Body of pancreas (tissue), 4 donors: ENCODE measurements at regions of chr13 and their contacts with region 1.

Region 1: DNA sequence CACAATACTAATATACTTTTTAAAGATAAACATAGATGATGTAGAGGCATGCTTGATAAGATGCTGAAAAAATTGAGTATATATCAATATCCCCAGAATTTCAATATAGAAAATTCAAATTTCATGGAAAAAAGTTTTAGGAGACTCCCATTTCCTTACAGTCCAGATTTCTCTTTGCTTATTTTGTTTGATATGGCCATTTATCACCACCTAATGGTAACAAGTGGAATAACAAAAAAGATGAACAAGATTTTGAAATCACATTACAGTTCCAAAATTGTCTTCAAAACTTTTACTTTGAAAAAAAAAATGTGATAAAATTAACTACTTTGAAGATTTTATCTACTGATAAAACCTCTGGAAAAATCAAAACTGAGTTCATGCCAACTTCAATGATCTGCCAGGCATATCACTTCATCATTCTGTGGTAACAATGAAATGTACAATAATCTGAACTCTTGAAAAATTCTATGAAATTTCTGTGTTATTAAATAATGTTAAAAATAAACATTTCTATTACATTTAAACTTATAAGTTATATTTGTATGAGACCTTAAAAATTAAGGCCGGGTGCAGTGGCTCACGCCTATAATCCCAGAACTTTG is 17.5 kb downstream of the MIPEP start:
- DNase-seq: no peak
- ATAC-seq: no peak
- H3K4me3 ChIP-seq: no peak overlapping the region
- H3K27ac ChIP-seq: no peak overlapping the region
- H3K4me1 ChIP-seq: peaks cover 5% of the 10 kb centered on the region
- H3K27me3 ChIP-seq: no peaks in the 10 kb centered on the region
- CTCF ChIP-seq: peak; percentile 24 to 73 (median 65)
- POLR2A ChIP-seq: no peak

Region 2: DNA sequence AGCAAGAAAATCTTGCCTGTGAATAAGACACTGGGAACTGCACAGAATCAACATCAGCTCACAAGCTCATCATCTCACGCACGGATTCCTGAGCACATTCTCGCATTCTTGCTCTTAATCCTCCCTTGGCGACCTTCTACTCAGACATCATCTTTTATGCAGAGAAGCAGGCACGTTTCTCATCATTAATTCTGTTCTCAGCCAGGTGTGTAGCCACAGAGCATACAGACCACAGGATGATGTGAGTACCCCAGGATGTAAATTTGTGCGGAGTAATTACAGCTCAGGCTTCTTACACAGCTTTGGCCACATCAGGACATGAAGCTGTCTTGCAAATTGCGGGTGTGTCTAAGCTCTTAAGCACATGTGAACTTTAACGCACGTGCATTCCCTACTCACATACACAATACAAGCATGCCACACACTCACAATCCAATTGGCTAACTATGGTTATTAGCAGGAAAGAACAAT is 401.7 kb before region 1 on chr13:
- intact Hi-C with region 1: loop called (anchors 10 kb)
- DNase-seq: no peak
- ATAC-seq: no peak
- H3K4me3 ChIP-seq: no peak overlapping the region
- H3K27ac ChIP-seq: no peak overlapping the region
- H3K4me1 ChIP-seq: peaks cover 15% of the 10 kb centered on the region
- H3K27me3 ChIP-seq: no peaks in the 10 kb centered on the region
- CTCF ChIP-seq: no peak
- POLR2A ChIP-seq: no peak

Region 3: GRCh38 chr13:23715762-23716235 is 155.9 kb before region 1 on chr13:
- intact Hi-C with region 1: loop called (anchors 10 kb)
- DNase-seq: peak in 3 of 4 donors; percentile 36 to 60 (median 51)
- ATAC-seq: no peak
- H3K4me3 ChIP-seq: no peak overlapping the region
- H3K27ac ChIP-seq: no peak overlapping the region
- H3K4me1 ChIP-seq: no peaks in the 10 kb centered on the region
- H3K27me3 ChIP-seq: no peaks in the 10 kb centered on the region
- CTCF ChIP-seq: peak in 6 of 7 experiments; percentile 15 to 55 (median 36)
- POLR2A ChIP-seq: no peak